Testis (tissue), 5 donors: ENCODE measurements at regions of chr16 and their contacts with region 1.

Region 1: DNA sequence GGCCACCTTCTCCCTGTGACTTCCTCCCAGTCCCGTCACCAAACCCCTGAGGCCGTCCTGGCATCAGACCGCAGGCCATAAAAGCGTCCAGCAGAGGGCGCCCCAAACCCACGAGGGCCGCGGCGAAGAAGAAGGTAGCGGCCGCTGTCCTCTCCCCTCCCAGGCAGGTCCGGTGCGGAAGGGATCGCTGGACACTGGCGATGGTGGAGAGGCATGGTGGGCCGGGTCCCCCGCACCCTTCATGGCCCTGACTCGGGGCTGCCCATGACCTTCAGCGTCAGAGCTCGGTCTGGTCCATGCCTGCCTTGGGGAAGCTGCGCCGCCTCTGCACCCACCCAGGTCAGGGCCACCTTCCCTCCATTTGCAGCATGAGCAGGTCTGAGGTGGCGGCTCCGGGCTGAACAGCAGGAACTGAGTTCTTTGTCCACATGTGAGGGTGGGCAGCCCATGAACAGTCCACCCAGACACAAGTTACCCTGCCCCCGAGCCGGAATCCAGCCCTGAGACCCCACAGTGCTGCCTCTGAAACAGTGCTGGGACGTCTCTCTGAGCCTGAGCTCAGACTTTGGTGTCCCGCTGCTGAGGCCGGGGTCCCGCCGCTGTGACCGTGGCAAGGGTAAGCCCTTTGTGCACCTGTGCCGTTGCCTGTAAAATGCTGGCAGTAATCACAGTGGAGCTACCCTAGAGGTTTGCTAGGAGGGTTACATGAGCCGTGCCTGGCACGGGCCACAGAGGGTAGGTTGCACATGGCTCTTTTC is 40.8 kb upstream of the CMIP start:
- DNase-seq: peak; percentile 89
- H3K4me3 ChIP-seq: peak overlapping the region in 1 of 2 donors; percentile 48
- H3K27ac ChIP-seq: no peak overlapping the region
- H3K4me1 ChIP-seq: peaks cover 6% of the 10 kb centered on the region
- H3K27me3 ChIP-seq: no peaks in the 10 kb centered on the region
- CTCF ChIP-seq: peak; percentile 78 to 96 (median 89)
- POLR2A ChIP-seq: no peak

Region 2: DNA sequence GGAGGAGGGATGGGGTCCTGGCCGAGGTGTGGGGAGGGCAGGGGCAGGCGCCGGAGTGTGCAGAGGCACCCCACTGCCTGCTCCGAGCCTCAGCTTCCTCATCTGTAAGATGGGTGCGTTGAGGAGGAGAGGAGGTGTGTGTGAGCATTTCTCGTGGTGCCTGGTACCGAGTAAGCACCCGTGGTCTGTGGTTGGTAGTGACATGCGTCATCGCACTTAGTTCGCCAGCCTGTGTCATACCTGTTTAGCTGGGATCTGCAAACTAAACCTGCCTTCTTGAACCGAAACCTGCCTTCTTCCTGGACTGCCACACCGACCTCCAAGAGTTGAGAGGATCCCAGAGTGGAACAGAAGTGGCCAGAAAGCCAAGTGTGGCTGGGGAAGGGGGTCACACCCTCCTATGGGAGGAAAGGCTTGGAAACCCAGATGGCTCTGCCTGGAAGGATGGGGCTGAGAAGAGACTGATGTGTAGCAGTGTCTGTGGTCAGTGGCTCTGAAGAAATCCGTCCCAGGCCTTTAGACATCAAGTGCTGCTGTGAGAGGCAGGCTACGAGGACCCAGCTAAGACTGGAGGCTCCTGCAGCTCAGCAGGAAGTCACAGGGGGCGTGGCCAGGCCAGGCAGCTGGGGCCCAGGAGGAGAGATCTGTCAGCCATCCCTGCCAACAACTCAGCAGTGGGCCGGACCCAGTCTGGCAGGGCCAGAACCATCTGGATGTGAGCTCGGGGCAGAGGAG is 212.7 kb after region 1 on chr16:
- intact Hi-C with region 1: loop called (anchors 10 kb)
- DNase-seq: peak; percentile 37
- H3K4me3 ChIP-seq: no peak overlapping the region
- H3K27ac ChIP-seq: no peak overlapping the region
- H3K4me1 ChIP-seq: peaks cover 6% of the 10 kb centered on the region
- H3K27me3 ChIP-seq: no peaks in the 10 kb centered on the region
- CTCF ChIP-seq: no peak
- POLR2A ChIP-seq: no peak

Region 3: DNA sequence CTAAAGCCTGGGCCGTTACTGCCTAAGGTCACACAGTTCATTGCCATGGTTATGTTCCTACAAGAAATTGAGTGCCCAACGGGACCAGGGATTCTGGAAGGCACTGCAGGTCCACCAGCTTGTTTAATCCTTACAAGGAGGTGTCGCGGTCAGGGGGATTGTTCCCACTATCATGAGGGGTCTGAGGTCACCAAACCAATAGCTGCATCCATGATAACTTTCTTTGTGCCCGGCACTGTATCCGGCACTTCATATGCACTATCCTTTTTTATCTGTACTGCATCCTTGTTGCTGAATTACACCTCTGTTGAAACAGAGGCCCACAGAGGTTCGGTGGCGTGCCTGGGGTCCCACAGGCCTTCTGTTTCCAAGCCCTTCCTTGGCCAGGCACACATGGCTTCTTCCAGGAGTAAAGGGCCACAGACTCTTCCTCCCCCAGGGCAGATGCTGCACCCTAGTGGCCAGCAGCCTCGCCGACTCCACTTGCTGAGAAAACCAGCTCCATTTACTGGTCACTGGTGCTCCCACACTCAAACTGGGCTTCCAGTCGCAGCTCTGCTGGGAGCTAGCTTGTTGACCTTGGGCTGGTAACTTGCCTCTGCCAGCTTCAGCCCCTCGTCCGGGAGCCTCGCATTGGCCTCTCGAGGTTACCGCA is 293.3 kb after region 1 on chr16:
- intact Hi-C with region 1: loop called (anchors 10 kb)
- DNase-seq: no peak
- H3K4me3 ChIP-seq: no peak overlapping the region
- H3K27ac ChIP-seq: no peak overlapping the region
- H3K4me1 ChIP-seq: peaks cover 29% of the 10 kb centered on the region
- H3K27me3 ChIP-seq: no peaks in the 10 kb centered on the region
- CTCF ChIP-seq: peak in 2 of 3 experiments; percentile 46 to 53
- POLR2A ChIP-seq: no peak